GM23248 (cell line): ENCODE measurements at regions of chr5 and their contacts with region 1.

Region 1: GRCh38 chr5:79689541-79690466 is at the start of gene CMYA5:
- DNase-seq: peak; percentile 66
- H3K4me3 ChIP-seq: peak within 1 kb of the TSS; percentile 68
- H3K27ac ChIP-seq: no peak within 1 kb of the TSS
- H3K4me1 ChIP-seq: peaks cover 29% of the 10 kb centered on the region
- H3K27me3 ChIP-seq: no peaks in the 10 kb centered on the region
- total RNA-seq, gene CMYA5: 0.97 and 1.0 TPM in 2 replicates

Region 2: DNA sequence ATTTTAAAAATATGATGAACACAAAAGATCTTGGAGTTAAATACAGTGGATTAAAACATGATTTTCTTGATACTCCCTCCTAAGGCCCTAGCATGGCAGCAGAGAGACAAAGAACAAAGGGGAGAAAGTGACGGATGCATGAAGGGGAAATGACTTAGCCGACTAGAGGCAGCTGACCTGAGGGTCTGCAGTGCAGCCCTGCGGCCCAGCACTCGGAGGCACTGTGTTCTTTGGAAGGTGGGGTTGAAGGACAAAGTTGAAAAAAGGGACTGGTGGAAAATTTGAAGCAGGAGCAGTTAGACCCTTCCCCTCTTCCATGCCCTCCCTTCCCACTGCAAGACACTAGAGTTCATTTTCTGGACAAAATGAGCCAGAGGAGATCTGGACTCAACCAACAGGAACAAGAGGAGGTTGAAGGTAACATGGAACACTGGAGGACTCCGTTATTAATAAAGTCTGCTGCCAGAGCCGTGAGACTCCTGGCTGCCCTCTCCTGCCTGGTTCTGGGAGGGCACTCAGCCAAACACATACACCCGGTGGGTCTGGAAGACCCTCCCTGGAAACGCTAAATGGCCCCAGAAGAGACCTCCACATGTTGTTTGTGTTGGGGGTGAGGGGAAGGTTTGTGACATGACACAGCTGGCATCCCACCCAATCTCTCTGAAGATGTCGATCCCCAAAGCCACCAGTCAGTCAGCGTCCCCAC is 355.8 kb before region 1 on chr5:
- in situ Hi-C with region 1: no loop called
- DNase-seq: no peak
- H3K4me3 ChIP-seq: no peak overlapping the region
- H3K27ac ChIP-seq: no peak overlapping the region
- H3K4me1 ChIP-seq: no peaks in the 10 kb centered on the region
- H3K27me3 ChIP-seq: no peaks in the 10 kb centered on the region

Region 3: GRCh38 chr5:79938468-79938867 is 248.7 kb after region 1 on chr5:
- in situ Hi-C with region 1: no loop called
- DNase-seq: no peak
- H3K4me3 ChIP-seq: no peak overlapping the region
- H3K27ac ChIP-seq: no peak overlapping the region
- H3K4me1 ChIP-seq: peaks cover 17% of the 10 kb centered on the region
- H3K27me3 ChIP-seq: no peaks in the 10 kb centered on the region

Region 4: GRCh38 chr5:80083101-80083890 is 393.5 kb after region 1 on chr5:
- in situ Hi-C with region 1: loop called (anchors 10 kb)
- DNase-seq: peak; percentile 94
- H3K4me3 ChIP-seq: peak overlapping the region; percentile 72
- H3K27ac ChIP-seq: peak overlapping the region; percentile 64
- H3K4me1 ChIP-seq: peaks cover 4% of the 10 kb centered on the region; the same call in 1 of the 2 replicates
- H3K27me3 ChIP-seq: no peaks in the 10 kb centered on the region